ENCODE measurements at regions of chr12 and their contacts with region 1.

Region 1: DNA sequence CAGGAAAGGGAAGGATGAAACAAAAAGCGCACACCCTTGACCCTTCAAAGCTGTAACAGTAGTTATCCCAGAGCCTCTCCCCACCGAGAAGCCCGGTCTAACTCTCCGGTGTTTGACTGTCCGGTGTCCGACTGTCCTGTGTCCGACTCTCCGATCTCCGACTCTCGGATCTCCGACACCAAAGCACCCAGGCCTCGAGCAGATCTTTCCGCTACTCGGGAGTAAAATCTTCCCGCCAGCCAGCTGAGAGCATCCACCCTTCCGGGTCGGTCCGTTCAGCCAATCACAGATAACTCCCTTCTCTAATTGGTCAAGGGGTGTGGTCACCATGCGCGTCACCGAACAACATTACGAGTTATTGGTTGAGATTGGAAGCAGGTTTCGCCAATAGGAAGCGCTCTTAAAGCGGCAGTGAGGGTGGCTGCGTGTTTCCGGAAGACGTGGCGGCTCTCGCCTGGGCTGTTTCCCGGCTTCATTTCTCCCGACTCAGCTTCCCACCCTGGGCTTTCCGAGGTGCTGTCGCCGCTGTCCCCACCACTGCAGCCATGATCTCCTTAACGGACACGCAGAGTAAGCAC is at the starts of genes GOLT1B and RECQL:
- DNase-seq: peak; percentile 97
- H3K4me3 ChIP-seq: peak within 1 kb of the TSS; percentile 99
- H3K27ac ChIP-seq: peak within 1 kb of the TSS; percentile 82
- H3K4me1 ChIP-seq: peaks cover 31% of the 10 kb centered on the region
- CTCF ChIP-seq: no peak
- total RNA-seq, gene GOLT1B: 9.5 and 12.7 TPM in 2 replicates
- total RNA-seq, gene RECQL: 53.1 and 55.9 TPM in 2 replicates

Region 2: GRCh38 chr12:21438643-21439042 is 62.8 kb before region 1 on chr12:
- CTCF ChIA-PET with region 1: no interaction called
- POLR2A ChIA-PET with region 1: interaction called, 10 read pairs
- intact Hi-C with region 1: loop called (anchors 2 kb)
- DNase-seq: peak; percentile 3
- H3K4me3 ChIP-seq: peak overlapping the region; percentile 90
- H3K27ac ChIP-seq: peak overlapping the region; percentile 65
- H3K4me1 ChIP-seq: peaks cover 16% of the 10 kb centered on the region
- CTCF ChIP-seq: no peak

Region 3: GRCh38 chr12:21444193-21445146 is 57.0 kb before region 1 on chr12:
- CTCF ChIA-PET with region 1: no interaction called
- POLR2A ChIA-PET with region 1: interaction called, 10 read pairs
- intact Hi-C with region 1: no loop called
- DNase-seq: no peak
- H3K4me3 ChIP-seq: no peak overlapping the region
- H3K27ac ChIP-seq: no peak overlapping the region
- H3K4me1 ChIP-seq: peaks cover under 1% of the 10 kb centered on the region
- CTCF ChIP-seq: no peak

Measured in OCI-LY7 (cell line).